GM12878 (cell line): ENCODE measurements at regions of chr5 and their contacts with region 1.

Region 1: GRCh38 chr5:69042915-69043658 is 50.7 kb upstream of the SLC30A5 start:
- DNase-seq: peak; percentile 92
- ATAC-seq: peak; percentile 97
- H3K4me3 ChIP-seq: peak overlapping the region; percentile 60; the same call in 1 of the 2 replicates
- H3K27ac ChIP-seq: peak overlapping the region; percentile 68
- H3K4me1 ChIP-seq: no peaks in the 10 kb centered on the region
- H3K27me3 ChIP-seq: no peaks in the 10 kb centered on the region
- CTCF ChIP-seq: peak; percentile 66 to 90 (median 84)
- EP300 ChIP-seq: no peak
- POLR2A ChIP-seq: no peak
- RAD21 ChIP-seq: peak; percentile 87

Region 2: DNA sequence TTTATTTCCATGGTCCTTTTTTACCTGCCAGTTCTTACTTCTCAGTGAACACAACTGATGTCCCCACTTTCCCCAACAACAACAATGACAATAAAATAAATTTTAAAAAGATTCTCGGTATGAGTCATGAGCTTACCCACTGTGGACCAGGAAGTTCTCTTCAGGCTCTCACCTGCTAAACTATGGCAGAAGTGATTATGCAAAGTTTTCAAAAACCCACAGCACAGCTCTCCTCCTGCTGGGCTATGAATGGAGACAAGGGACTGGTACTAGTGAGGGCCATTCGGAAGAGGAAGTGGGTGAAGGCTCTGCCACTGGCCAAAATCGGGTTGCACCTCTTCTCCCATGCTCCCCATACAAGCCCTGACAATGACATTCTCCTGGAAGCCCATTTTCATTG is 398.1 kb before region 1 on chr5:
- CTCF ChIA-PET with region 1: no interaction called
- POLR2A ChIA-PET with region 1: no interaction called
- RAD21 ChIA-PET with region 1: no interaction called
- SMC1A ChIA-PET with region 1: no interaction called
- in situ Hi-C with region 1: no loop called
- intact Hi-C with region 1: no loop called
- DNase-seq: peak; percentile 83
- ATAC-seq: peak; percentile 97
- H3K4me3 ChIP-seq: no peak overlapping the region
- H3K27ac ChIP-seq: no peak overlapping the region
- H3K4me1 ChIP-seq: peaks cover 13% of the 10 kb centered on the region; the same call in 1 of the 2 replicates
- H3K27me3 ChIP-seq: no peaks in the 10 kb centered on the region
- CTCF ChIP-seq: no peak
- EP300 ChIP-seq: peak; percentile 14 to 57; a peak in 2 of 4 replicates
- POLR2A ChIP-seq: no peak
- RAD21 ChIP-seq: peak; percentile 36

Region 3: GRCh38 chr5:68911840-68912690 is 131.0 kb before region 1 on chr5:
- CTCF ChIA-PET with region 1: no interaction called
- POLR2A ChIA-PET with region 1: no interaction called
- RAD21 ChIA-PET with region 1: no interaction called
- SMC1A ChIA-PET with region 1: no interaction called
- in situ Hi-C with region 1: no loop called
- intact Hi-C with region 1: no loop called
- DNase-seq: no peak
- ATAC-seq: no peak
- H3K4me3 ChIP-seq: no peak overlapping the region
- H3K27ac ChIP-seq: no peak overlapping the region
- H3K4me1 ChIP-seq: no peaks in the 10 kb centered on the region
- H3K27me3 ChIP-seq: no peaks in the 10 kb centered on the region
- CTCF ChIP-seq: no peak
- EP300 ChIP-seq: no peak
- POLR2A ChIP-seq: no peak
- RAD21 ChIP-seq: no peak

Region 4: DNA sequence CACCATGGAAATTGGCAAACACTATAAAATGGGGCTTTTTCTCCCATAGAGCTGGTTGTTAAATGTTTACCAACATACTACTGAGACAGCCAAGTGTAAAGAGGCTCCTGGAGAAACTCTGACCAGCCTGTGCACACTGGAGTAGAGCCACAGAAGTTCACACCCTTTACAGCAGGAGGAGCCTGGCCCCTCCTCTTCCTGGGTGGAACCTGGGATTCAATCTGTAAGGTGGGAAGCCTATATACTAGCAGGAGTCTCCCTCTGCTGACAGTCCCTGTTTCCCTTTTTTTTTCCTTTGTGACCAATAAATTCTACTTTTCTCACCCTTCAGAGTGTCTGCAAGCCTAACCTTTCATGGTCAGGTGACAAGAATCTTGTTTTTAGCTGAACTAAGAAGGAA is 40.3 kb after region 1 on chr5:
- CTCF ChIA-PET with region 1: interaction called, 13 read pairs
- POLR2A ChIA-PET with region 1: no interaction called
- RAD21 ChIA-PET with region 1: interaction called, 3 read pairs
- SMC1A ChIA-PET with region 1: interaction called, 3 read pairs
- in situ Hi-C with region 1: no loop called
- intact Hi-C with region 1: no loop called
- DNase-seq: no peak
- ATAC-seq: peak; percentile 24; the same call in 1 of the 3 replicates
- H3K4me3 ChIP-seq: no peak overlapping the region
- H3K27ac ChIP-seq: no peak overlapping the region
- H3K4me1 ChIP-seq: peaks cover 8% of the 10 kb centered on the region; the same call in 1 of the 2 replicates
- H3K27me3 ChIP-seq: no peaks in the 10 kb centered on the region
- CTCF ChIP-seq: no peak
- EP300 ChIP-seq: no peak
- POLR2A ChIP-seq: no peak
- RAD21 ChIP-seq: no peak

Region 5: GRCh38 chr5:69334793-69335268 is 291.7 kb after region 1 on chr5:
- CTCF ChIA-PET with region 1: interaction called, 14 read pairs
- POLR2A ChIA-PET with region 1: no interaction called
- RAD21 ChIA-PET with region 1: no interaction called
- SMC1A ChIA-PET with region 1: interaction called, 4 read pairs
- in situ Hi-C with region 1: no loop called
- intact Hi-C with region 1: loop called (anchors 2 kb)
- DNase-seq: no peak
- ATAC-seq: peak; percentile 84
- H3K4me3 ChIP-seq: no peak overlapping the region
- H3K27ac ChIP-seq: no peak overlapping the region
- H3K4me1 ChIP-seq: peaks cover 3% of the 10 kb centered on the region; the same call in 1 of the 2 replicates
- H3K27me3 ChIP-seq: no peaks in the 10 kb centered on the region
- CTCF ChIP-seq: peak; percentile 57 to 86 (median 79)
- EP300 ChIP-seq: no peak
- POLR2A ChIP-seq: no peak
- RAD21 ChIP-seq: peak; percentile 63